CD8-positive, alpha-beta T cell (primary cell): ENCODE measurements at regions of chr16 and their contacts with region 1.

Region 1: GRCh38 chr16:66954097-66954659 is 6.9 kb upstream of the CES3 start:
- DNase-seq: peak; percentile 56 to 81 (median 74)
- ATAC-seq: peak; percentile 91
- H3K4me3 ChIP-seq: no peak overlapping the region
- H3K4me3 Mint-ChIP-seq: no peak overlapping the region
- H3K27ac ChIP-seq: no peak overlapping the region
- H3K27ac Mint-ChIP-seq: no peak overlapping the region
- H3K4me1 ChIP-seq: peaks cover under 1% of the 10 kb centered on the region
- H3K4me1 Mint-ChIP-seq: peaks cover 6% of the 10 kb centered on the region
- H3K27me3 ChIP-seq: peaks cover 2 to 7% of the 10 kb centered on the region in 2 experiments
- H3K27me3 Mint-ChIP-seq: peaks cover 37% of the 10 kb centered on the region
- CTCF ChIP-seq: peak; percentile 85

Region 2: GRCh38 chr16:66894948-66895688 is 59.1 kb before region 1 on chr16:
- CTCF ChIA-PET with region 1: interaction called, 5 read pairs
- POLR2A ChIA-PET with region 1: no interaction called
- intact Hi-C with region 1: loop called in 1 of 2 experiments (anchors 2 kb)
- DNase-seq: peak; percentile 16 to 74 (median 56)
- ATAC-seq: peak; percentile 94
- H3K4me3 ChIP-seq: no peak overlapping the region
- H3K4me3 Mint-ChIP-seq: no peak overlapping the region
- H3K27ac ChIP-seq: no peak overlapping the region
- H3K27ac Mint-ChIP-seq: no peak overlapping the region
- H3K4me1 ChIP-seq: peaks cover 3% of the 10 kb centered on the region
- H3K4me1 Mint-ChIP-seq: peaks cover 3% of the 10 kb centered on the region
- H3K27me3 ChIP-seq: no peaks in the 10 kb centered on the region
- H3K27me3 Mint-ChIP-seq: no peaks in the 10 kb centered on the region
- CTCF ChIP-seq: peak; percentile 49

Region 3: DNA sequence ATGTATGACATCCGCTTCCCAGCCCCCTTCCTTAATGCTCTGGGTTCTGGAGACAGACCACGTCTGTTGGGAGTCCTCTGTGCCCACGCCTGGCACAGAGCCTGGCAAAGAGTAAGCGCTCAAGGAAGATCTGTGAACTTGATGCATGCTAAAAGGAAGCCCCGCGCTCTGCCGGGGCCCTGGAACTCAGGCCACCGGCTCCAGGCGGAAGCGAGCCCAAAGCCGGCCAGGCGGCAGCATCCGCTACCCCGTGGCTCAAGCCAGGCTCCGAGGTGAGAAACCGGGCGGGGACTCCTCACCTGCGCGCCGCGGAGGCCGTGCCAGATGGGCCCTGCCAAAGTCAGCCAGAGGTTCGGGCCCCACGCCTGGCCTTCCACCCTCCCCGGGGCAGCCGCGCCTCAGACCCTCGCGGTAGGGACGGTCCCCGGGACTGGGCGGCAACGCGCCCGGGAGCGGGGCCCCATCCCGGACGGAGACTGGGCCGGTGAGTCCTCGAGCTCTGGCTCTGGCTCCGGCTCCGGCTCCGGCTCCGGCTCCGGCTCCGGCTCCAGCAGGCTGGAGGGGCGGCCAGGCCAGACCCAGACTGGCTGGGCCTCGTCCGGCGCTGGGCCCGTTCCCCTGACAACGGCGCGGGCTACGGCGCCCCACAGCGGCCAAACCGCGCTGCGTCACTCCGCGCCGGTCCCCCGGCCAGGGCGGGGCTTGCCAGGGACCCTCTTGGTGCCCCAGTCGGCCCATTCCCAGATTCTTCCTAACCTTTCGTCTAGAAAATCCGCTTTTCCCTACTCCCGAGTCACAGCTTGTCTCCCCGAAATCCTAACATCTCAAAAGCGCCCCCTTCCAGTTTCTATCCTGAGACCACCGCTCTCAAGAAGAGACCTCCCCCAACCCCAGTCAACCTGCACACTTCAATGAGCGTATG is 462.0 kb after region 1 on chr16 and contains the start of gene ZDHHC1:
- CTCF ChIA-PET with region 1: no interaction called
- POLR2A ChIA-PET with region 1: no interaction called
- intact Hi-C with region 1: loop called in 1 of 2 experiments (anchors 10 kb)
- DNase-seq: peak; percentile 16 to 67 (median 44)
- ATAC-seq: peak; percentile 88
- H3K4me3 ChIP-seq: peak within 1 kb of the TSS; percentile 35 to 55
- H3K4me3 Mint-ChIP-seq: peak within 1 kb of the TSS; percentile 75
- H3K27ac ChIP-seq: no peak within 1 kb of the TSS
- H3K27ac Mint-ChIP-seq: no peak within 1 kb of the TSS
- H3K4me1 ChIP-seq: peaks cover 5% of the 10 kb centered on the region
- H3K4me1 Mint-ChIP-seq: peaks cover 7% of the 10 kb centered on the region
- H3K27me3 ChIP-seq: no peaks in the 10 kb centered on the region
- H3K27me3 Mint-ChIP-seq: peaks cover 25% of the 10 kb centered on the region
- CTCF ChIP-seq: no peak
- total RNA-seq, gene ZDHHC1: not detected

Region 4: DNA sequence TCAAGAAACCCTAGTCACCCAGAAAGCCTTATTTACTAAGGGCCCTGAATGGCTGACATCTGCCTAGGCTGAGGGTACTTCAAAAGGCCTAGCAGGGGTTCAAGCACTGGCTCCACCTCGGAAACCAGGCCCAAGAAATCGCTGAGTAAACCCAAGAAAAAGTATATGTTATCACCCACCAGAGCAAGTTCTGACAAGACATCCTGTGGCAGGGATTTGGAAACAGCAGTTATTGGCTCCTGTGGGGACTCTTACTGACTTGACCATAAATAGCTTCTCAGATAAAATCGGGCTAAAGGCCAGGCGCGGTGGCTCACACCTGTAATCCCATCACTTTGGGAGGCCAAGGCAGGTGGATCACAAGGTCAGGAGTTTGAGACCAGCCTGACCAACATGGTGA is 514.6 kb after region 1 on chr16:
- CTCF ChIA-PET with region 1: no interaction called
- POLR2A ChIA-PET with region 1: no interaction called
- intact Hi-C with region 1: loop called in 1 of 2 experiments (anchors 2 kb)
- DNase-seq: no peak
- ATAC-seq: no peak
- H3K4me3 ChIP-seq: no peak overlapping the region
- H3K4me3 Mint-ChIP-seq: no peak overlapping the region
- H3K27ac ChIP-seq: no peak overlapping the region
- H3K27ac Mint-ChIP-seq: no peak overlapping the region
- H3K4me1 ChIP-seq: no peaks in the 10 kb centered on the region
- H3K4me1 Mint-ChIP-seq: peaks cover 53% of the 10 kb centered on the region
- H3K27me3 ChIP-seq: no peaks in the 10 kb centered on the region
- H3K27me3 Mint-ChIP-seq: no peaks in the 10 kb centered on the region
- CTCF ChIP-seq: no peak